ENCODE measurements at regions of chr14 and their contacts with region 1.

Region 1: GRCh38 chr14:75906676-75907280 is 75.0 kb downstream of the TGFB3 start:
- DNase-seq: peak in 4 of 5 donors; percentile 50 to 66 (median 57)
- ATAC-seq: peak in 3 of 4 donors; percentile 32 to 81 (median 65)
- H3K4me3 ChIP-seq: no peak overlapping the region
- H3K27ac ChIP-seq: peak overlapping the region in 2 of 12 donors; percentile 19 to 20
- H3K4me1 ChIP-seq: peaks cover 0 to 26% (median 7%) of the 10 kb centered on the region in 12 donors
- H3K27me3 ChIP-seq: no peaks in the 10 kb centered on the region
- CTCF ChIP-seq: peak; percentile 83 to 97 (median 92)
- POLR2A ChIP-seq: no peak

Region 2: GRCh38 chr14:75794615-75795038 is 112.2 kb before region 1 on chr14:
- intact Hi-C with region 1: loop called in 3 of 10 experiments (anchors 10 kb)
- DNase-seq: no peak
- ATAC-seq: peak; percentile 92 to 99 (median 98)
- H3K4me3 ChIP-seq: no peak overlapping the region
- H3K27ac ChIP-seq: peak overlapping the region in 3 of 12 donors; percentile 15 to 54 (median 26)
- H3K4me1 ChIP-seq: peaks cover 0 to 11% (median 5%) of the 10 kb centered on the region in 12 donors
- H3K27me3 ChIP-seq: no peaks in the 10 kb centered on the region
- CTCF ChIP-seq: peak; percentile 17 to 71 (median 53)
- POLR2A ChIP-seq: no peak

Region 3: DNA sequence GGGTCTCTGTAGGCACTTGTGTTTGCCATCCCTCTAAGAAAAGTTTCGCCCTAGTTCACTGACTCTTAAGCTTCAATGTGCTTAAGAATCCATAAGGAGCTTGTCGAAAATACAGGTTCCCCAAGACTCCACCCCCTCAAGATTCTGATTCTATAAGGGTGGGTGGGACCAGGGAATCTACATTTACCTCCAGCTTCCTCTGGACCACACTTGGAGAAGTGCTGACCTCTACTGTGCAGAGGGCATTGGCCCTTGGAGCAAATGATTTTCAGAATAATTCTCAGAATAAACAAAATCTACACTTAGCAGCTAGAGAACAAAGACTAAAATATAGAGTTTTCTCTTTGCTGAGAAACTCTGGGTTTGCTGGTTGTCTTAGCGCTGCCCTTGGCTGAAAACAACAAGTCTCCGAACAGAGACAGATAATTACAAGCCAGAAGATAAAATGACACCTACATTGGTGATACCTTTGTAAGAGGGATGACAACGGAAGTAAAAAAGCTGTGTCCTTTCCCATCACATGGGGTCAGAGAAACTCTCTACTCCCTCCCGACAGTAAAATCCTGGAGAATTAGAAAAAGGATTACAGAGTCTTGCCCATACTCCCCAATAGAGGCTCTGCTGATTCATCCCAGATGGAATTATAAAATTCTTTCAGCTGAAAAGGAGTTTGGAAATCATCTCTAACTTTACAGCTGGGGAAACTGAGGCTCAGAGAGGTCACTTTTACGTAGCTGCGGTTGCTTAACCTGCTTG is 70.2 kb after region 1 on chr14:
- intact Hi-C with region 1: loop called (anchors 1 to 5 kb)
- DNase-seq: no peak
- ATAC-seq: no peak
- H3K4me3 ChIP-seq: peak overlapping the region in 1 of 12 donors; percentile 2
- H3K27ac ChIP-seq: no peak overlapping the region
- H3K4me1 ChIP-seq: peaks cover 0 to 53% (median 23%) of the 10 kb centered on the region in 12 donors
- H3K27me3 ChIP-seq: no peaks in the 10 kb centered on the region
- CTCF ChIP-seq: no peak
- POLR2A ChIP-seq: no peak

Measured in heart left ventricle (tissue), 16 donors.